Naive thymus-derived CD4-positive, alpha-beta T cell (primary cell): ENCODE measurements at regions of chr18 and their contacts with region 1.

Region 1: GRCh38 chr18:13216092-13216582 is 2.4 kb upstream of the LDLRAD4 start:
- DNase-seq: peak; percentile 20 to 72 (median 62)
- ATAC-seq: peak; percentile 75
- H3K4me3 ChIP-seq: peak overlapping the region; percentile 48
- H3K4me3 Mint-ChIP-seq: peak overlapping the region; percentile 87 to 99 (median 94)
- H3K27ac ChIP-seq: peak overlapping the region; percentile 60
- H3K27ac Mint-ChIP-seq: peak overlapping the region in 8 of 9 donors; percentile 76 to 96 (median 88)
- H3K4me1 ChIP-seq: peaks cover 5 to 16% of the 10 kb centered on the region in 2 donors
- H3K4me1 Mint-ChIP-seq: peaks cover 14 to 38% (median 35%) of the 10 kb centered on the region in 7 donors
- H3K27me3 ChIP-seq: no peaks in the 10 kb centered on the region
- H3K27me3 Mint-ChIP-seq: peaks cover 0 to 50% (median 6%) of the 10 kb centered on the region in 5 donors

Region 2: DNA sequence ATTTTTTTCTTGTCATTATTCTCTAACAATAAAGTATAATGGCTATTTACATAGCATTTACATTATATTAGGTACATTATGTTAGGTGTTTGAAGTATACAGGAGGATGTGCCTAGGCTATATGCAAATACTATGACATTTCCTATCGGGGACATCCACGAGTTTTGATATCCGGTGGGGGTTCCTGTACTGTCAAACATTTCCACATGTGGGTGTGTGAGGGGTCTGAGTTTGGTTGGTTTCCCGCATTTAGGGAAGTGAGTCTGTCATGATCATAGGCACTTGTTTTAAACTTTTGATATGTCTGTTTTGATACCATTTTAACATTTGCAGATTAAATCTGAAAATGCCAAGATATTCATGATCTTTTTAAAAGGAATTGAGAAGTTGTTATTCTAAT is 149.0 kb before region 1 on chr18:
- CTCF ChIA-PET with region 1: no interaction called
- POLR2A ChIA-PET with region 1: no interaction called
- intact Hi-C with region 1: no loop called
- DNase-seq: peak in 1 of 9 donors; percentile 6
- ATAC-seq: no peak
- H3K4me3 ChIP-seq: no peak overlapping the region
- H3K4me3 Mint-ChIP-seq: no peak overlapping the region
- H3K27ac ChIP-seq: no peak overlapping the region
- H3K27ac Mint-ChIP-seq: peak overlapping the region in 8 of 9 donors; percentile 29 to 86 (median 45)
- H3K4me1 ChIP-seq: no peaks in the 10 kb centered on the region
- H3K4me1 Mint-ChIP-seq: peaks cover 5 to 36% (median 31%) of the 10 kb centered on the region in 7 donors
- H3K27me3 ChIP-seq: no peaks in the 10 kb centered on the region
- H3K27me3 Mint-ChIP-seq: no peaks in the 10 kb centered on the region

Region 3: DNA sequence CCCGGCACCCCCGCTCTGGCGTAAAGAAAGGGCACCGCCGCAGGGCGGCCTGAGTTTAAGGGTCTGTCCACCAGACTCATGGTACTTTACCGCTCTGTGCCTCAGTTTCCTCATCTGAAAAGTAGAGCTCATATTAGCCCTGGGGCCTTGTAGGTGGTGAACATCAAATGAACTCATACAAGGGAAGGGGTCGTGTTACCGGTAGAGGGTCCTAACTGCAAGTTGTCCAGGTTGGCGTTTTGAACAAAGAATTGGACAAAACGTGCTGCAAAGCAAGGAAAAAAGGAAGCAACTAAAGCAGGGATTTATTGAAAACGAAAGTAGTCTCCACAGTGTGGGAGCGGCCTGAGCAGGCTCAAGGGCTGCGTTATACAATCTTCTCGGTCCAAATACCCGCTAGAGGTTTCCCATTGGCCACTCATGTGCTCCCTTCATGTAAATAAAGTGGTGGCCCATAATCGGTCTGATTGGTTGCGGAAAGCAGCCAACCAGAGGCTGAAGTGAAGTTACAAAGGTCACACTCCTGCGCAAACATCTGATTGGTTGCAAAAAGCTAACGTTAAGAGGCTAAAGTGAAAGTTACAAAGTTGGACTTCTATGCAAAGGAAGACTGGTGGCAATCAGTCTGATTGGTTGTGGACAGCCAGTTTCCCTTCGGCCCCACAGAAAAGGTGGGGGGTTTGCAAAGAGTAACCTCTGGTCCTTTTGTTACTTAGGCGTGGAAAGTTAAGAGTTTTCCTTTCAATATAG is 78.3 kb before region 1 on chr18:
- CTCF ChIA-PET with region 1: no interaction called
- POLR2A ChIA-PET with region 1: no interaction called
- intact Hi-C with region 1: loop called in 1 of 2 experiments (anchors 1 kb)
- DNase-seq: peak; percentile 26 to 86 (median 77)
- ATAC-seq: peak; percentile 94
- H3K4me3 ChIP-seq: peak overlapping the region; percentile 83
- H3K4me3 Mint-ChIP-seq: peak overlapping the region; percentile 92 to 100 (median 99)
- H3K27ac ChIP-seq: peak overlapping the region; percentile 75
- H3K27ac Mint-ChIP-seq: peak overlapping the region; percentile 93 to 98 (median 97)
- H3K4me1 ChIP-seq: peaks cover 0 to 7% of the 10 kb centered on the region in 2 donors
- H3K4me1 Mint-ChIP-seq: peaks cover 12 to 32% (median 28%) of the 10 kb centered on the region in 7 donors
- H3K27me3 ChIP-seq: no peaks in the 10 kb centered on the region
- H3K27me3 Mint-ChIP-seq: peaks cover 0 to 22% (median 0%) of the 10 kb centered on the region in 5 donors

Region 4: GRCh38 chr18:13313006-13313686 is 97.0 kb after region 1 on chr18:
- CTCF ChIA-PET with region 1: no interaction called
- POLR2A ChIA-PET with region 1: no interaction called
- intact Hi-C with region 1: loop called (anchors 2 to 5 kb)
- DNase-seq: peak in 7 of 9 donors; percentile 41 to 74 (median 67)
- ATAC-seq: peak; percentile 79
- H3K4me3 ChIP-seq: no peak overlapping the region
- H3K4me3 Mint-ChIP-seq: peak overlapping the region; percentile 51 to 81 (median 68)
- H3K27ac ChIP-seq: peak overlapping the region; percentile 48
- H3K27ac Mint-ChIP-seq: peak overlapping the region; percentile 70 to 97 (median 89)
- H3K4me1 ChIP-seq: peaks cover 0 to 17% of the 10 kb centered on the region in 2 donors
- H3K4me1 Mint-ChIP-seq: peaks cover 21 to 55% (median 42%) of the 10 kb centered on the region in 7 donors
- H3K27me3 ChIP-seq: no peaks in the 10 kb centered on the region
- H3K27me3 Mint-ChIP-seq: no peaks in the 10 kb centered on the region

Region 5: GRCh38 chr18:13435596-13436327 is 219.6 kb after region 1 on chr18:
- CTCF ChIA-PET with region 1: interaction called, 3 read pairs
- POLR2A ChIA-PET with region 1: no interaction called
- intact Hi-C with region 1: loop called (anchors 1 kb)
- DNase-seq: no peak
- ATAC-seq: no peak
- H3K4me3 ChIP-seq: no peak overlapping the region
- H3K4me3 Mint-ChIP-seq: peak overlapping the region in 8 of 10 donors; percentile 12 to 91 (median 31)
- H3K27ac ChIP-seq: no peak overlapping the region
- H3K27ac Mint-ChIP-seq: peak overlapping the region in 8 of 9 donors; percentile 6 to 95 (median 92)
- H3K4me1 ChIP-seq: peaks cover 12 to 43% of the 10 kb centered on the region in 2 donors
- H3K4me1 Mint-ChIP-seq: peaks cover 31 to 65% (median 57%) of the 10 kb centered on the region in 7 donors
- H3K27me3 ChIP-seq: no peaks in the 10 kb centered on the region
- H3K27me3 Mint-ChIP-seq: no peaks in the 10 kb centered on the region

Region 6: GRCh38 chr18:13530879-13531387 is 314.8 kb after region 1 on chr18:
- CTCF ChIA-PET with region 1: interaction called, 18 read pairs
- POLR2A ChIA-PET with region 1: interaction called, 4 read pairs
- intact Hi-C with region 1: loop called (anchors 1 kb)
- DNase-seq: peak in 4 of 9 donors; percentile 15 to 35 (median 24)
- ATAC-seq: peak; percentile 58
- H3K4me3 ChIP-seq: no peak overlapping the region
- H3K4me3 Mint-ChIP-seq: no peak overlapping the region
- H3K27ac ChIP-seq: no peak overlapping the region
- H3K27ac Mint-ChIP-seq: peak overlapping the region in 2 of 9 donors; percentile 13 to 74
- H3K4me1 ChIP-seq: no peaks in the 10 kb centered on the region
- H3K4me1 Mint-ChIP-seq: peaks cover 12 to 54% (median 39%) of the 10 kb centered on the region in 7 donors
- H3K27me3 ChIP-seq: no peaks in the 10 kb centered on the region
- H3K27me3 Mint-ChIP-seq: no peaks in the 10 kb centered on the region

Region 7: GRCh38 chr18:13680612-13681011 is 464.5 kb after region 1 on chr18:
- CTCF ChIA-PET with region 1: no interaction called
- POLR2A ChIA-PET with region 1: no interaction called
- intact Hi-C with region 1: loop called in 1 of 2 experiments (anchors 1 kb)
- DNase-seq: peak in 1 of 9 donors; percentile 3
- ATAC-seq: no peak
- H3K4me3 ChIP-seq: no peak overlapping the region
- H3K4me3 Mint-ChIP-seq: no peak overlapping the region
- H3K27ac ChIP-seq: no peak overlapping the region
- H3K27ac Mint-ChIP-seq: no peak overlapping the region
- H3K4me1 ChIP-seq: no peaks in the 10 kb centered on the region
- H3K4me1 Mint-ChIP-seq: peaks cover 2 to 22% (median 12%) of the 10 kb centered on the region in 7 donors
- H3K27me3 ChIP-seq: no peaks in the 10 kb centered on the region
- H3K27me3 Mint-ChIP-seq: no peaks in the 10 kb centered on the region